ENCODE measurements at regions of chr17 and their contacts with region 1.

Region 1: DNA sequence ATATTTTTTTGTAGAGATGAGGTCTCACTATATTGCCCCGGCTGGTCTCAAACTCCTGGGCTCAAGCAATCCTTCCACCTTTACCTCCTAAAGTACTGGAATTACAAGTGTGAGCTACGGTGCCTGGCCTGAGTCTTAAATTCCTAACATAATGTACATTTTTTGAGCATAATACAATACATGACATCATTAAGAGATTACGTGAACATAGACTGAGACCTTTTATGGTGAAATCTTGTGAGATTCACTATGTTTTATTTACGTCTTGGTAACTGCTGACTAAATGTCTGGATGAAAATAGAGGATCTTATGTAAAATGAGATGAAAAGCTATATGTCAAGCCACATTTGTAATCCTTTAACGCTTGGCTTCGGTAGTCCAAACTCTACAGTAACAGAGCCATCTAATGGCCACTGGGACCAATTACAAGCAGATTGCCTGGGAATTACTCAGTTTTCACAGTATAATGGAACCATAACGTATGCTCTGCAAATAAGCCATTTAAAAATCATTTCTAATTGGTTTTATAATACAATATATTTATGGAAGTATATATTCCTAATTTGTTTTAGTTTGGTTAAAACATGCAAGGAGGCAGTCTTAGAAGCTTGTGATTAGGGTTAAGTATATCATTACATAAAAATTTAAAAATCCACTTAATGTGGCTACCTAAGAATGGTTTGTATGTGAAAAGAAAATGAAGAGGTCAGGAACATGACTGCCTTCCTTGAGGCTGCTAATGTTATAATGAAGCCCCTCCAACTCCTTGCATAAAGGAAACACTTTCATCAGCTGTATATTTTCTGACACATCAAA is 8.1 kb upstream of the EFCAB13 start:
- DNase-seq: no peak
- H3K4me3 ChIP-seq: no peak overlapping the region
- H3K27ac ChIP-seq: peak overlapping the region; percentile 72 to 82 (median 80)
- H3K4me1 ChIP-seq: peaks cover 0 to 24% (median 18%) of the 10 kb centered on the region in 4 donors
- H3K27me3 ChIP-seq: no peaks in the 10 kb centered on the region
- CTCF ChIP-seq: peak; percentile 73 to 95 (median 82)
- EP300 ChIP-seq: peak in 1 of 4 donors; percentile 20
- POLR2A ChIP-seq: no peak

Region 2: GRCh38 chr17:47229535-47230443 is 85.9 kb before region 1 on chr17:
- intact Hi-C with region 1: loop called (anchors 1 kb)
- DNase-seq: peak; percentile 96
- H3K4me3 ChIP-seq: peak overlapping the region in 3 of 4 donors; percentile 13 to 29 (median 27)
- H3K27ac ChIP-seq: peak overlapping the region; percentile 39 to 69 (median 59)
- H3K4me1 ChIP-seq: peaks cover 0 to 27% (median 23%) of the 10 kb centered on the region in 4 donors
- H3K27me3 ChIP-seq: no peaks in the 10 kb centered on the region
- CTCF ChIP-seq: peak; percentile 99 to 100 (median 99)
- EP300 ChIP-seq: peak in 1 of 4 donors; percentile 18
- POLR2A ChIP-seq: no peak

Region 3: GRCh38 chr17:47239619-47240374 is 75.9 kb before region 1 on chr17:
- intact Hi-C with region 1: no loop called
- DNase-seq: peak; percentile 89
- H3K4me3 ChIP-seq: no peak overlapping the region
- H3K27ac ChIP-seq: peak overlapping the region; percentile 66 to 77 (median 74)
- H3K4me1 ChIP-seq: peaks cover 0 to 17% (median 12%) of the 10 kb centered on the region in 4 donors
- H3K27me3 ChIP-seq: no peaks in the 10 kb centered on the region
- CTCF ChIP-seq: no peak
- EP300 ChIP-seq: peak in 2 of 4 donors; percentile 29 to 47
- POLR2A ChIP-seq: no peak

Measured in sigmoid colon (tissue), 7 donors.